ENCODE measurements at regions of chr13 and their contacts with region 1.

Region 1: GRCh38 chr13:91216928-91217690 is 130.4 kb upstream of the MIR17HG start:
- DNase-seq: no peak
- H3K4me3 ChIP-seq: no peak overlapping the region
- H3K27ac ChIP-seq: no peak overlapping the region
- H3K4me1 ChIP-seq: no peaks in the 10 kb centered on the region
- CTCF ChIP-seq: no peak

Region 2: GRCh38 chr13:90997951-90998350 is 219.2 kb before region 1 on chr13:
- CTCF ChIA-PET with region 1: no interaction called
- POLR2A ChIA-PET with region 1: no interaction called
- intact Hi-C with region 1: no loop called
- DNase-seq: no peak
- H3K4me3 ChIP-seq: no peak overlapping the region
- H3K27ac ChIP-seq: no peak overlapping the region
- H3K4me1 ChIP-seq: no peaks in the 10 kb centered on the region
- CTCF ChIP-seq: no peak

Region 3: DNA sequence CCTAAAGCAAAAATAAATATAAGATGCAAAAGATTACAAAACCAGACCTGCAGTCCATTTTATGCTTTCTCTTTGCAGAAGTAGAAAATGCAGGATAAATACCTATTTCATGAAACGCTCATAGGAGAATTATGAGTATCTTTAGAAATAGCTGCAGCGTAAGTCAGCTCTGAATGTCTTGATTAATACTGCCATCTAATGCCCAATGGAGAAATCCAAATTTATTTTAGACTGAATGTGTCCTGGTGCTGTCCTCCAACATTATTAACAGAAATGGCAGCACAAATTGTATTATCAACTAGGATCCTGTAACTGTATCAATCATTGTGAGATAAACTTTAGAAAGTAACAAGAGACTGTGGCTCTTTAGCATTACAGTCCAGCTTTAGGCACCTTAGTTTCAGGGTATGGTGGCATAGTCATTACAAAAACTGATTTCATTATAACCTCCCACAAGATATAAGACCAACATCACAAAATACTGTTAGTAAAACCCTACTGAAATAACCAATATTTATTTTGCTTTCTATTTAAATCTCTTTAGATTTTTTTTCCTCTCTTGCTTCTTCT is 31.7 kb before region 1 on chr13:
- CTCF ChIA-PET with region 1: no interaction called
- POLR2A ChIA-PET with region 1: interaction called, 12 read pairs
- intact Hi-C with region 1: no loop called
- DNase-seq: peak; percentile 44
- H3K4me3 ChIP-seq: no peak overlapping the region
- H3K27ac ChIP-seq: no peak overlapping the region
- H3K4me1 ChIP-seq: no peaks in the 10 kb centered on the region
- CTCF ChIP-seq: no peak

Region 4: GRCh38 chr13:91193358-91193757 is 23.8 kb before region 1 on chr13:
- CTCF ChIA-PET with region 1: no interaction called
- POLR2A ChIA-PET with region 1: interaction called, 12 read pairs
- intact Hi-C with region 1: no loop called
- DNase-seq: no peak
- H3K4me3 ChIP-seq: no peak overlapping the region
- H3K27ac ChIP-seq: no peak overlapping the region
- H3K4me1 ChIP-seq: no peaks in the 10 kb centered on the region
- CTCF ChIP-seq: no peak

Region 5: DNA sequence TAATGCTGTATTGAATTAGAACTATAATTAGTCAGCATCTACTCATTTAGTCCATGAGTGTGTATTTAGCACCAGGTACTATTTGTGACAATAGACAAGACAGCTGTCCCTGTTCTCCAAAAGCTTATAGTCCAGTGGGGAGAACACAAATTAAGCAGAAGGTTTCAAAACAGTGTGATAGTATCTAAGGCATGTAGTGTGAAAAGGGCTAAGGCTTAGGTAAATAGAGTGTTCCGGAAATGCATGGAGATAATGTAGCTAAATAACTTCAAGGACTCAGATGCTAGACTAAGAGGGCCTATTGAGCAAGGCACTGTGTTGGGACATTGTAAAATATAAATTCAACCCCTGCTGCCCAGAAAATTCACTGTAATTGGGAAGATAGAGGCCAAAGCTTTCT is 13.7 kb before region 1 on chr13:
- CTCF ChIA-PET with region 1: interaction called, 3 read pairs
- POLR2A ChIA-PET with region 1: interaction called, 47 read pairs
- intact Hi-C with region 1: no loop called
- DNase-seq: no peak
- H3K4me3 ChIP-seq: no peak overlapping the region
- H3K27ac ChIP-seq: no peak overlapping the region
- H3K4me1 ChIP-seq: no peaks in the 10 kb centered on the region
- CTCF ChIP-seq: no peak

Region 6: GRCh38 chr13:91228940-91229339 is 11.8 kb after region 1 on chr13:
- CTCF ChIA-PET with region 1: no interaction called
- POLR2A ChIA-PET with region 1: interaction called, 26 read pairs
- intact Hi-C with region 1: no loop called
- DNase-seq: no peak
- H3K4me3 ChIP-seq: no peak overlapping the region
- H3K27ac ChIP-seq: no peak overlapping the region
- H3K4me1 ChIP-seq: no peaks in the 10 kb centered on the region
- CTCF ChIP-seq: no peak

Region 7: DNA sequence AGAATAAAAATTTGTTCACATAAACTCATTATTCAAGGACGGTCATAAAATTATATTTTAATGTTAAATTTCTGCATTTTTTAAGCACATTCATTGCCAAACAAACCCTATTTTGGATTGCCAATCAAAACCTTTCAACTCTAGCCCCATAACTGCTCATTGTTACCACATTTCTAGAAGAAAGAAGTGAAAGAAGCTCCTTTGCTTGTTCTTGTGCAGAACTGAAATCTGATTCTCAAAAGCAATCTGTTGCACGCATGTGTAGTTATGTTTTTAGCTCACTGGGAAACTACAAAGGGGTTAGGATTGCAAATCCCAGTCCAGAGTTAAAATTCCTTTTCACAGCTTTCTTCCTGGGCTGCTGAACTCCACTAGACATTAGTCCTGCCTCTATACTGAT is 20.9 kb after region 1 on chr13:
- CTCF ChIA-PET with region 1: interaction called, 3 read pairs
- POLR2A ChIA-PET with region 1: interaction called, 12 read pairs
- intact Hi-C with region 1: no loop called
- DNase-seq: no peak
- H3K4me3 ChIP-seq: no peak overlapping the region
- H3K27ac ChIP-seq: no peak overlapping the region
- H3K4me1 ChIP-seq: no peaks in the 10 kb centered on the region
- CTCF ChIP-seq: no peak

Region 8: DNA sequence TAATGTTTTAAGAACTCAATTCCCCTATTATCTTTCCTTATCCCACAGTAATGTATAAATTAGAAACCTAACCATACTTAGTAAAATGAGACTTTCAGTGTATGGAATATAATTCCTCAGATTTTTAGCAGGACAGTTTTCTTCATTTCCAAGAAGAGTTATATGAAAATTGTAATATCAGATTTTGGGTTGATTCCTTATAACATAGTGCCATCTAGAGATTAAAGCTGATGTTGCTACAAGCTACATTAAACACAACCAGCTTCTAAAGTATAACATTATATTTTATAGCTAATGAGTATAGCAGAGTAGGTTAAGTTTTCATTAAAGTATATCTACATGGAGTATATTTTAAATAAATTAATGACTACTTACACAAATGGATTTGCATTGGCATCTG is 30.7 kb after region 1 on chr13:
- CTCF ChIA-PET with region 1: no interaction called
- POLR2A ChIA-PET with region 1: interaction called, 29 read pairs
- intact Hi-C with region 1: no loop called
- DNase-seq: peak; percentile 50
- H3K4me3 ChIP-seq: no peak overlapping the region
- H3K27ac ChIP-seq: no peak overlapping the region
- H3K4me1 ChIP-seq: no peaks in the 10 kb centered on the region
- CTCF ChIP-seq: no peak

Region 9: DNA sequence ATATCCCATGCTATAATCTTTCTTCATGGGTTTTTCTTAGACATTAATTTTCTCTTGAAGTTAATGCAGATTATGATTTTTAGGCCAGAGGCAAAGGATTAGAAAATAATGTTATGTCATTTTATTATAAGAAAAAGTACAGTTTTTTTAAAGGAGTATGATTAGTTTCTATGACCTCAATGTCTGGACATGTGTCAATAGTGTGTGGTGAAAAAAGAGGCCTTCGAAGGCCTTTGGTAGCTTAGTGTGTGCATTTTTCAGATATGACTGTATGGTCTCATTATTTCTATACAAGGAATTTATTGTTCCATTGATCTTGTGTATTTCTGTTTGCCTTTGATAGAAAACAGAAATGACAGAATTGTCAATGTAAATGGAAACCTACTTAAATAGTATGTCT is 377.0 kb after region 1 on chr13:
- CTCF ChIA-PET with region 1: no interaction called
- POLR2A ChIA-PET with region 1: no interaction called
- intact Hi-C with region 1: no loop called
- DNase-seq: no peak
- H3K4me3 ChIP-seq: no peak overlapping the region
- H3K27ac ChIP-seq: no peak overlapping the region
- H3K4me1 ChIP-seq: no peaks in the 10 kb centered on the region
- CTCF ChIP-seq: no peak

Measured in OCI-LY7 (cell line).